CD4-positive, alpha-beta memory T cell (primary cell): ENCODE measurements at regions of chr6 and their contacts with region 1.

Region 1: DNA sequence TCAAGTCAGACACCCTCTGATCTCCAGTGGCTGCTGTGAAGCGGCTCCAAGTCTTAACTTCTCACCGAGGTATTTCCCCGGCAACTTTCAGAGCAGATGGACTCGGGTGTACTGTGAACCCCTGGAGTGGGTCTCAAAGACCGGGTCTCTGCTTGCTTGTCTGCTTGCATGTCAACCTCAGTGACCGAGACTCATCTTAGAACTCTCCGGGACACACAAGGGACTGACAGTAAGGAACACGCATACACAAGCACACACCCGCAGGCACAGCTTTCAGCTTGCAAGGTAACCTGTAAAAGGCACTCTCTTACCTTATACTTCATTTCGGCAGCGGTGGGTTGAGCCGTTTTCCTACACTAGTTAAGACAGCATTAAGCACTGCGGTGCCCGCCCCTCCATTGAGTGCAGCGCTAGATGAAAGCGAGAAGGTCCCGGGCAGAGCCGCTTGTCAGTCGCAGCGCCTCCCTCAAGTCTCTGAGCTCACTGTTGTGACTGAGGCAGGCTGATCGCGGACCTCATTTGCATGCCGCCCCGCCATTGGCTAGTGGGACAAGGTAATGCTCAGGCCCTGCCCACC is at the start of gene NEDD9:
- DNase-seq: peak; percentile 90 to 99 (median 94)
- H3K4me3 ChIP-seq: peak within 1 kb of the TSS; percentile 55 to 80
- H3K4me3 Mint-ChIP-seq: peak within 1 kb of the TSS; percentile 91 to 98 (median 94)
- H3K27ac ChIP-seq: peak within 1 kb of the TSS; percentile 89
- H3K27ac Mint-ChIP-seq: peak within 1 kb of the TSS; percentile 96 to 99 (median 98)
- H3K4me1 ChIP-seq: peaks cover 61% of the 10 kb centered on the region
- H3K4me1 Mint-ChIP-seq: peaks cover 46 to 78% (median 54%) of the 10 kb centered on the region in 4 donors
- H3K27me3 ChIP-seq: no peaks in the 10 kb centered on the region
- H3K27me3 Mint-ChIP-seq: no peaks in the 10 kb centered on the region
- total RNA-seq, gene NEDD9: 42.7 to 47.4 TPM

Region 2: GRCh38 chr6:11172501-11173332 is 59.6 kb before region 1 on chr6:
- CTCF ChIA-PET with region 1: interaction called, 7 read pairs
- POLR2A ChIA-PET with region 1: no interaction called
- intact Hi-C with region 1: loop called (anchors 1 kb)
- DNase-seq: peak; percentile 56 to 72 (median 65)
- H3K4me3 ChIP-seq: peak overlapping the region in 1 of 2 donors; percentile 9
- H3K4me3 Mint-ChIP-seq: peak overlapping the region; percentile 16 to 78 (median 64)
- H3K27ac ChIP-seq: no peak overlapping the region
- H3K27ac Mint-ChIP-seq: peak overlapping the region in 4 of 7 donors; percentile 3 to 65 (median 30)
- H3K4me1 ChIP-seq: peaks cover 12% of the 10 kb centered on the region
- H3K4me1 Mint-ChIP-seq: peaks cover 9 to 20% (median 10%) of the 10 kb centered on the region in 4 donors
- H3K27me3 ChIP-seq: no peaks in the 10 kb centered on the region
- H3K27me3 Mint-ChIP-seq: no peaks in the 10 kb centered on the region

Region 3: GRCh38 chr6:11198663-11199603 is 33.3 kb before region 1 on chr6:
- CTCF ChIA-PET with region 1: interaction called, 7 read pairs
- POLR2A ChIA-PET with region 1: interaction called, 18 read pairs
- intact Hi-C with region 1: loop called (anchors 2 kb)
- DNase-seq: peak; percentile 60 to 77 (median 72)
- H3K4me3 ChIP-seq: peak overlapping the region in 1 of 2 donors; percentile 27
- H3K4me3 Mint-ChIP-seq: peak overlapping the region; percentile 33 to 80 (median 63)
- H3K27ac ChIP-seq: peak overlapping the region; percentile 52
- H3K27ac Mint-ChIP-seq: peak overlapping the region; percentile 79 to 97 (median 94)
- H3K4me1 ChIP-seq: peaks cover 53% of the 10 kb centered on the region
- H3K4me1 Mint-ChIP-seq: peaks cover 40 to 72% (median 59%) of the 10 kb centered on the region in 4 donors
- H3K27me3 ChIP-seq: no peaks in the 10 kb centered on the region
- H3K27me3 Mint-ChIP-seq: no peaks in the 10 kb centered on the region

Region 4: DNA sequence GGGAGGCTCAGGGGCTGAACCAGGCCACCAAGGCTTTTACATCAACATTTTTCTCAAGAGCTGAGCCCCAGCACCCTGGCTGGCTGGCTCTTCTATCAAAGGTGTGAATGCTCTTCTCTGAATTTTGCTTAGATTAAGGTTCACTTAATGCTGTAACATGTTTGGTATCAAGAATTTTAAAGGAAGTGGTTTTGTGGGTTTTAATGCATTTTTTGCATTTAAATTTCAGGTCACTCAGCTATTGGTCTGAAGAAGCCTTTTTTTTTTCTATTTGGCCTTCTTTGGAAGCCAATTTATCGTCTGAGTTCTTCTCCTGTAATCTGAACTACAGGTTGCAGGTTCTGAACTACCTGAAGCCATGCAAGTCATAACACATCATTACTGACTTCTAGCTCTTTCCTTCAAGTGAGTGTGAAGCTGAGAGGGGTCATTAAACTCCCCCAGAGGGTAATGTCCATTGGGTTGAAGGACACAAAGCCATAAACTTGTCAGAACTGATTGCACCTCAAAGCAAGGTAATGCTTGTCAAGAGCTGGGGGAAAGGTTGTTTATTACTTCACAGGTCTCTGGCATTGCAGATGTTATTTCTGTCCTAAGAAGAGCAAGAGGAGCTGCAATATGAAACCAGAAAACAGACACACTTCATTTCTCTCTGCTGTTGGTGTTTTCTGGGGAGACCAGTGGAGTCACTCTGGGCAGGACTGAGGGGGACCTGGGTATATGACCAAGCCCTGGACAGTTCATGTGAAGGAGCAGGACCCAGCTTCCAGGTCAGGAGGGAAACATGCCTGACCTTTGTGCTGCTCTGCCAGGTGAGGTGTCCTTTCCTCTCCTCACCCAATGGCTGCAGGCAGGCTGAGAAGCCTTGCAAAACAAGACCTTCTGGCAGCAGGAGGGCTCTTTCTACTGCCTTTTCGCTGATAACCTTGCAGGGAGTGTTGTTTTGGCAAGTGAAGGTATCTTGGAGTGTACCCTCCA is 26.3 kb after region 1 on chr6:
- CTCF ChIA-PET with region 1: interaction called, 3 read pairs
- POLR2A ChIA-PET with region 1: interaction called, 25 read pairs
- intact Hi-C with region 1: loop called (anchors 1 kb)
- DNase-seq: peak; percentile 54 to 70 (median 66)
- H3K4me3 ChIP-seq: no peak overlapping the region
- H3K4me3 Mint-ChIP-seq: peak overlapping the region; percentile 3 to 65 (median 46)
- H3K27ac ChIP-seq: peak overlapping the region; percentile 38
- H3K27ac Mint-ChIP-seq: peak overlapping the region; percentile 63 to 96 (median 88)
- H3K4me1 ChIP-seq: peaks cover 62% of the 10 kb centered on the region
- H3K4me1 Mint-ChIP-seq: peaks cover 55 to 86% (median 69%) of the 10 kb centered on the region in 4 donors
- H3K27me3 ChIP-seq: no peaks in the 10 kb centered on the region
- H3K27me3 Mint-ChIP-seq: no peaks in the 10 kb centered on the region

Region 5: GRCh38 chr6:11317885-11318771 is 85.8 kb after region 1 on chr6:
- CTCF ChIA-PET with region 1: no interaction called
- POLR2A ChIA-PET with region 1: interaction called, 7 read pairs
- intact Hi-C with region 1: loop called (anchors 1 kb)
- DNase-seq: peak; percentile 55 to 89 (median 74)
- H3K4me3 ChIP-seq: no peak overlapping the region
- H3K4me3 Mint-ChIP-seq: peak overlapping the region in 7 of 8 donors; percentile 3 to 49 (median 27)
- H3K27ac ChIP-seq: peak overlapping the region; percentile 42
- H3K27ac Mint-ChIP-seq: peak overlapping the region; percentile 79 to 96 (median 91)
- H3K4me1 ChIP-seq: peaks cover 26% of the 10 kb centered on the region
- H3K4me1 Mint-ChIP-seq: peaks cover 33 to 58% (median 42%) of the 10 kb centered on the region in 4 donors
- H3K27me3 ChIP-seq: no peaks in the 10 kb centered on the region
- H3K27me3 Mint-ChIP-seq: no peaks in the 10 kb centered on the region

Region 6: GRCh38 chr6:11366183-11366933 is 134.1 kb after region 1 on chr6:
- CTCF ChIA-PET with region 1: no interaction called
- POLR2A ChIA-PET with region 1: no interaction called
- intact Hi-C with region 1: loop called (anchors 5 kb)
- DNase-seq: peak; percentile 19 to 79 (median 38)
- H3K4me3 ChIP-seq: peak overlapping the region; percentile 9 to 42
- H3K4me3 Mint-ChIP-seq: peak overlapping the region; percentile 58 to 78 (median 72)
- H3K27ac ChIP-seq: peak overlapping the region; percentile 38
- H3K27ac Mint-ChIP-seq: peak overlapping the region; percentile 53 to 94 (median 79)
- H3K4me1 ChIP-seq: peaks cover 62% of the 10 kb centered on the region
- H3K4me1 Mint-ChIP-seq: peaks cover 60 to 92% (median 67%) of the 10 kb centered on the region in 4 donors
- H3K27me3 ChIP-seq: no peaks in the 10 kb centered on the region
- H3K27me3 Mint-ChIP-seq: no peaks in the 10 kb centered on the region

Region 7: GRCh38 chr6:11537229-11538051 is 305.2 kb after region 1 on chr6 and contains the start of gene TMEM170B:
- CTCF ChIA-PET with region 1: no interaction called
- POLR2A ChIA-PET with region 1: no interaction called
- intact Hi-C with region 1: loop called (anchors 1 kb)
- DNase-seq: peak; percentile 94 to 98 (median 97)
- H3K4me3 ChIP-seq: peak within 1 kb of the TSS; percentile 60 to 77
- H3K4me3 Mint-ChIP-seq: peak within 1 kb of the TSS; percentile 86 to 92 (median 90)
- H3K27ac ChIP-seq: peak within 1 kb of the TSS; percentile 54
- H3K27ac Mint-ChIP-seq: peak within 1 kb of the TSS; percentile 72 to 94 (median 92)
- H3K4me1 ChIP-seq: peaks cover 11% of the 10 kb centered on the region
- H3K4me1 Mint-ChIP-seq: peaks cover 7 to 24% (median 9%) of the 10 kb centered on the region in 4 donors
- H3K27me3 ChIP-seq: no peaks in the 10 kb centered on the region
- H3K27me3 Mint-ChIP-seq: peaks cover 2 to 4% of the 10 kb centered on the region in 2 donors
- total RNA-seq, gene TMEM170B: 1.9 to 2.1 TPM